ENCODE measurements at regions of chr12 and their contacts with region 1.

Region 1: DNA sequence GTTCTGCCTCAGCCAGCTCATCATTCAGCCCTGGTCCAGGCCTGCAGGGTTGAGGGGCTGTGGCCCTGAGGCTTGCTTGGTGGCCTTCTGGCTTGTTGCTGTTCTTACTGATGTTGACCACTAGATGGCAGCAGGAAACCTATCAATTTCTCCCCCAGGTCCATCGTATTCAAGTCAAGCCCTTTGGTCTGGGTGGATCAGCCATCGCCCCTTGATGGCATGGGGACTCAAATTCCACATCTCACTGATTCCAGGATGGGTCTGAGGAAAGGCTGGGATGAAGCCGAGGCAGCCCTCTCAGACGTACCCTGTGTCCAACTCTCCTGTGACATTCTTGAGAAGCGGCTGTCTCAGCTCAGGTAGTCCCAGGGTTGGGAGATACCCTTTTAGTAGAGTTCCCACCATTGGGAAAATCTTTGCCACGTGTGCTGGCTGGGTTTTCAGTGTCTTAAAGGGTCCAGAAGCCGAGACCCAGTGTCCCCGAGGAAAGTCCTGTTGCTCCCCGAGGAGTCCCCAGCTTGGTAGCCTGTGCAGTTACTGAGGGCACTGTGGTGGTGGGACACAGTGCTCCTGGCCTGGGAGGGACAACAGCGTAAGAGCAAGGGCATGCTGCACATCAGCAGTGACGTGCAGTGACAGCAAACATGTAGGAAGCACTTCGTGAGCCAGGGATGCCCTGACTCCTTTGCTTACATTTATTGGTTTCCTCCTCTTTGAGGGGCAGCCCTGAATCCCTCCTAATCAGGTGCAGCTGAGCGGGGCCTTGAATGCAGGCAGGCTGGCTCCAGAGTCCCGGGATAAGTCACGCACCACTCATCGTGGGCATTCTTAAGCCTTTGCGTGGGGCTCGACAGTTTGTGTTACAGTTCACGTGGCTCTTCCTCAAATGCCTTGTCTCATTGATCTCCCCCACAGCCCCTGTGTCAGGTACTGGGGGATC is 58.6 kb downstream of the TSPAN9 start:
- DNase-seq: peak in 12 of 14 experiments; percentile 4 to 74 (median 18)
- ATAC-seq: peak; percentile 51
- H3K4me3 ChIP-seq: no peak overlapping the region
- H3K4me3 Mint-ChIP-seq: no peak overlapping the region
- H3K27ac ChIP-seq: no peak overlapping the region
- H3K27ac Mint-ChIP-seq: no peak overlapping the region
- H3K4me1 ChIP-seq: no peaks in the 10 kb centered on the region
- H3K4me1 Mint-ChIP-seq: peaks cover 1% of the 10 kb centered on the region
- H3K27me3 ChIP-seq: peaks cover 20 to 38% of the 10 kb centered on the region in 2 experiments
- H3K27me3 Mint-ChIP-seq: peaks cover 49% of the 10 kb centered on the region
- CTCF ChIP-seq: peak; percentile 83

Region 2: GRCh38 chr12:3202734-3203446 is 67.1 kb after region 1 on chr12:
- CTCF ChIA-PET with region 1: no interaction called
- POLR2A ChIA-PET with region 1: no interaction called
- intact Hi-C with region 1: loop called (anchors 1 to 10 kb)
- DNase-seq: peak; percentile 12 to 66 (median 44)
- ATAC-seq: no peak
- H3K4me3 ChIP-seq: no peak overlapping the region
- H3K4me3 Mint-ChIP-seq: no peak overlapping the region
- H3K27ac ChIP-seq: no peak overlapping the region
- H3K27ac Mint-ChIP-seq: no peak overlapping the region
- H3K4me1 ChIP-seq: peaks cover 6% of the 10 kb centered on the region
- H3K4me1 Mint-ChIP-seq: peaks cover 4% of the 10 kb centered on the region
- H3K27me3 ChIP-seq: peaks cover 30 to 36% of the 10 kb centered on the region in 2 experiments
- H3K27me3 Mint-ChIP-seq: peaks cover 44% of the 10 kb centered on the region
- CTCF ChIP-seq: peak; percentile 76

Region 3: DNA sequence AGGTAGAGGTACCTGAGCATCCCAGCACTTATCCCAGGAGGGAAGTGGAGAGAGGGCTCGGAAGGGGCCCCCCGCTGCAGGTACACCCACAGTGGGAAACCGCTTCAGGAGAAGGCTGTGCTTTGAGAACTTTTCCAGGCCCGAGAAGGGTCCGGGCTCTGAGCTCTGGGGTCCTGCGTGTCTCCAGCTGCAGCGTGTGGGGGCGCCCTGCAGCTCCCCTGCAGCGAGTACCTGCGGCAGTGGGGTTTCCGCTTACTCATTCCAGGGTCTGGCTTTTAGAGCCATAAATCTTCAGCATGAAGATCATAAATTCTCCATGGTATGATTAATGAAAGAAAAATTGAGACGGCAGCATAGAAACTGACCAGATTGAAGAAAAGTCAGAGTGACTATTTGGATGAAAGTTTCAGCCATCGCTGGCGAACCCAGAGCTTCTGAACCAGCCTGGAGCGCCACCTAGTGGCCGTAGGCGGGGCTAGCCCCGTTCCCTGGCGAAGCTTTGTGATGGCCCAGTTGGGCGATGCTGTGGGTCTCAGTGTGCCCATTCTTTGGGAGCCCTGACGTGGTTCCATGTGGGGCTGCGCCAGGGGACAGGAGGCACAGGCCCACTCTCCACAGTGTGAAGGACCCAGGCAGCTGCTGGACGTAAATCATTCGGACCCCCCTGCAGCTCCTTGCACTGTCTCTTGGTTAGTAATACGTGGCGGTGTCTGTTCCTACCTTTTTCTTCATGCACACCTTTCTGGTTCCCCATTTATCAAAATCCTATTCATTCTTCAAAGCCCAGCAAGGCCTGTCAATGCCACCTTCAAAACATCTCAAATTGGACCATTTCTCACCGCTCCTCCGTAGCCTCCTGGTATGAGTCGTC is 139.6 kb after region 1 on chr12:
- CTCF ChIA-PET with region 1: no interaction called
- POLR2A ChIA-PET with region 1: no interaction called
- intact Hi-C with region 1: loop called (anchors 1 kb)
- DNase-seq: peak; percentile 43 to 78 (median 64)
- ATAC-seq: peak; percentile 66
- H3K4me3 ChIP-seq: no peak overlapping the region
- H3K4me3 Mint-ChIP-seq: no peak overlapping the region
- H3K27ac ChIP-seq: no peak overlapping the region
- H3K27ac Mint-ChIP-seq: no peak overlapping the region
- H3K4me1 ChIP-seq: peaks cover 6% of the 10 kb centered on the region
- H3K4me1 Mint-ChIP-seq: no peaks in the 10 kb centered on the region
- H3K27me3 ChIP-seq: peaks cover 0 to 7% of the 10 kb centered on the region in 2 experiments
- H3K27me3 Mint-ChIP-seq: peaks cover 19% of the 10 kb centered on the region
- CTCF ChIP-seq: peak; percentile 98

Region 4: DNA sequence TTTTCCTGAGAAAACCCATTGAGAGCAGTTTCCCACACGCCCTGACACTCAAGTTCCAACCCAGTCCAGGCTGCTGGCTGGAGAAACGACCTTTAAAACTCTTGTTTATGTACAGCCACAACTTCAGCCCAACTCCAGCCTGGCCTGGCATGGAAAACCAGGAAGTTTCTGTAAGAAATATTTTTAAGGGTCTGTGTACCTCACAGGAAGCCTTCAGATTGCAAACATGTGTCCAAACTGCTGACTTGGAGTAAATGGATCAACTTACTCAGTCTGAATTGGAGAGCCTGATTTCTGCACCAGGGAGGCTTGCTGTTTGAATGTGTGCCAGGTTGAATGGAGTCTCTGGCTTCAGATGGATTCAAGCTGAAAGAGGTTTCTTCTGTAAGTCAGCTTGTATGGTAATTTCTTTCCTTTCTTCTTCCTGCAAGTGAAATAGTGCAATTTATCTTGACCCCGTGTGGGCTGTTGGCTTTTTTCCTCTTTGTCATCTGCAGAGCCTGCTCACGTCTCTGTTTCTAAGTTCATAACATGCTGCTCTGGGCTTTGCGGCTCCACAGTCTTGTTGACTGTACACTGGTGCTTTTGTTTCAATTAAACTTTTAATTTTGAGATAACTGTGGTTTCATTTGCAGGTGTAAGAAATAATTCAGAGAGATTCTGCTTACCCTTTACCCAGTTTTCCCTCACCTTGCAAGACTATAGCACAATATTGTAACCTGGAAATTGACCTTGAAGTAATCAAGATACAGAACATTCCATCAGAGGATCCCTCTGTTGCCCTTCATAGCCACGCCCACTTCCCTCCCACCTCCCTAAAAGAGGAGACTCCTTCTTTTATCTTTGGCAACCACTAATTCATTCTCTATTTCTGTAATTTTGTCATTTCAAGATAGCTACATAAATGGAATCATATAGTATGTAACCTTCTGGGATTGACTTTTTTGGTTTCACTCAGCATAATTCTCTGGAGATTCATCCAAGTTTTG is 245.6 kb after region 1 on chr12:
- CTCF ChIA-PET with region 1: no interaction called
- POLR2A ChIA-PET with region 1: no interaction called
- intact Hi-C with region 1: no loop called
- DNase-seq: no peak
- ATAC-seq: no peak
- H3K4me3 ChIP-seq: no peak overlapping the region
- H3K4me3 Mint-ChIP-seq: no peak overlapping the region
- H3K27ac ChIP-seq: no peak overlapping the region
- H3K27ac Mint-ChIP-seq: no peak overlapping the region
- H3K4me1 ChIP-seq: no peaks in the 10 kb centered on the region
- H3K4me1 Mint-ChIP-seq: no peaks in the 10 kb centered on the region
- H3K27me3 ChIP-seq: peaks cover 0 to 3% of the 10 kb centered on the region in 2 experiments
- H3K27me3 Mint-ChIP-seq: peaks cover 31% of the 10 kb centered on the region
- CTCF ChIP-seq: no peak

Region 5: GRCh38 chr12:3803865-3804472 is 668.2 kb after region 1 on chr12:
- CTCF ChIA-PET with region 1: no interaction called
- POLR2A ChIA-PET with region 1: no interaction called
- intact Hi-C with region 1: loop called in 1 of 2 experiments (anchors 5 kb)
- DNase-seq: peak; percentile 54 to 84 (median 64)
- ATAC-seq: peak; percentile 71
- H3K4me3 ChIP-seq: no peak overlapping the region
- H3K4me3 Mint-ChIP-seq: no peak overlapping the region
- H3K27ac ChIP-seq: no peak overlapping the region
- H3K27ac Mint-ChIP-seq: peak overlapping the region; percentile 67
- H3K4me1 ChIP-seq: no peaks in the 10 kb centered on the region
- H3K4me1 Mint-ChIP-seq: no peaks in the 10 kb centered on the region
- H3K27me3 ChIP-seq: no peaks in the 10 kb centered on the region
- H3K27me3 Mint-ChIP-seq: no peaks in the 10 kb centered on the region
- CTCF ChIP-seq: peak; percentile 92

Region 6: DNA sequence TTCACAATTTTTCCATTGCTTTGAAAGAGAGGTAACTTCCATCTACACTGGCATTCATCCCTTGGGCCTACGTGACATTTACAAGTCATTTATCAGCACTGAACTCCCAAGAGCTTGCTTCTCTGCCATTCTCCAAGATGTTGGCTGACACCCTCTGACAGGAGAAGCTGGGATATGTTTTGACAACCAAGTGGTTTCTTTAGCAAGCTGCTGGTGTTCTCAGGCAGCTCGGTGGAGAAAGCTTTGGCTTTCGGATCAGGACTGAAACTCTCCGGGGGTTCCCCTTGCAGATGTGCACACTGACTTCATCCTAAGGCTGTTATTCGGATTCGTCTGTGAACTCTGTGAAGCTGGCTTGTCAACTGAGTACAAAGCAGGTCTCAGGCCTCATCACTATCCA is 1923.6 kb after region 1 on chr12:
- CTCF ChIA-PET with region 1: no interaction called
- POLR2A ChIA-PET with region 1: no interaction called
- intact Hi-C with region 1: no loop called
- DNase-seq: no peak
- ATAC-seq: no peak
- H3K4me3 ChIP-seq: no peak overlapping the region
- H3K4me3 Mint-ChIP-seq: no peak overlapping the region
- H3K27ac ChIP-seq: no peak overlapping the region
- H3K27ac Mint-ChIP-seq: no peak overlapping the region
- H3K4me1 ChIP-seq: no peaks in the 10 kb centered on the region
- H3K4me1 Mint-ChIP-seq: no peaks in the 10 kb centered on the region
- H3K27me3 ChIP-seq: peaks cover 0 to 3% of the 10 kb centered on the region in 2 experiments
- H3K27me3 Mint-ChIP-seq: peaks cover 19% of the 10 kb centered on the region
- CTCF ChIP-seq: no peak